ENCODE measurements at regions of chr17 and their contacts with region 1.

Region 1: GRCh38 chr17:38982858-38983746 is 15.9 kb upstream of the FBXO47 start:
- DNase-seq: peak in 1 of 2 donors; percentile 17
- ATAC-seq: peak; percentile 46 to 75
- H3K4me3 ChIP-seq: no peak overlapping the region
- H3K27ac ChIP-seq: no peak overlapping the region
- H3K4me1 ChIP-seq: peaks cover 0 to 9% of the 10 kb centered on the region in 2 donors
- H3K27me3 ChIP-seq: no peaks in the 10 kb centered on the region
- CTCF ChIP-seq: peak; percentile 63 to 78 (median 67)
- POLR2A ChIP-seq: no peak

Region 2: GRCh38 chr17:38400286-38400685 is 582.8 kb before region 1 on chr17:
- in situ Hi-C with region 1: no loop called
- intact Hi-C with region 1: no loop called
- DNase-seq: no peak
- ATAC-seq: no peak
- H3K4me3 ChIP-seq: no peak overlapping the region
- H3K27ac ChIP-seq: no peak overlapping the region
- H3K4me1 ChIP-seq: no peaks in the 10 kb centered on the region
- H3K27me3 ChIP-seq: no peaks in the 10 kb centered on the region
- CTCF ChIP-seq: no peak
- POLR2A ChIP-seq: no peak

Region 3: GRCh38 chr17:38898812-38899348 is 84.2 kb before region 1 on chr17:
- in situ Hi-C with region 1: loop called in 1 of 4 experiments (anchors 25 kb)
- intact Hi-C with region 1: no loop called
- DNase-seq: peak in 1 of 2 donors; percentile 37
- ATAC-seq: no peak
- H3K4me3 ChIP-seq: no peak overlapping the region
- H3K27ac ChIP-seq: peak overlapping the region; percentile 64 to 81 (median 76)
- H3K4me1 ChIP-seq: peaks cover 56 to 65% of the 10 kb centered on the region in 2 donors
- H3K27me3 ChIP-seq: no peaks in the 10 kb centered on the region
- CTCF ChIP-seq: no peak
- POLR2A ChIP-seq: no peak

Region 4: GRCh38 chr17:38958756-38959155 is 24.3 kb before region 1 on chr17:
- in situ Hi-C with region 1: no loop called
- intact Hi-C with region 1: no loop called
- DNase-seq: no peak
- ATAC-seq: no peak
- H3K4me3 ChIP-seq: no peak overlapping the region
- H3K27ac ChIP-seq: no peak overlapping the region
- H3K4me1 ChIP-seq: no peaks in the 10 kb centered on the region
- H3K27me3 ChIP-seq: no peaks in the 10 kb centered on the region
- CTCF ChIP-seq: no peak
- POLR2A ChIP-seq: no peak

Region 5: DNA sequence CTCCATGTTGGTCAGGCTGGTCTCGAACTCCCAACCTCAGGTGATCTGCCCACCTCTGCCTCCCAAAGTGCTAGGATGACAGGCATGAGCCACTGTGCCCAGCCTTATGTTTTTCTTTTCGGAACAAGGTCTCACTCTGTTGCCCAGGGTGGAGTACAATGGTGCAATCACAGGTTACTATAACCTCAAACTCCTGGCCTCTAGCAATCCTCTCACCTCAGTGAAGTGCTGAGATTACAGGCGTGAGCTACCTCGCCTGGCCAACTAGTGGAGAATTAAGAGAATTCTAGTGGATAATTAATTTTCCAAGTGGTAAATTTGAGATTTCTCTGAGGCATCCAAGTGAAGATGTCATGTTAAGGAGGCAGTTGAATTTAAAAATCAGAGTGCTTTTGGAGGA is 13.0 kb before region 1 on chr17:
- in situ Hi-C with region 1: no loop called
- intact Hi-C with region 1: no loop called
- DNase-seq: no peak
- ATAC-seq: no peak
- H3K4me3 ChIP-seq: no peak overlapping the region
- H3K27ac ChIP-seq: no peak overlapping the region
- H3K4me1 ChIP-seq: no peaks in the 10 kb centered on the region
- H3K27me3 ChIP-seq: no peaks in the 10 kb centered on the region
- CTCF ChIP-seq: no peak
- POLR2A ChIP-seq: no peak

Region 6: DNA sequence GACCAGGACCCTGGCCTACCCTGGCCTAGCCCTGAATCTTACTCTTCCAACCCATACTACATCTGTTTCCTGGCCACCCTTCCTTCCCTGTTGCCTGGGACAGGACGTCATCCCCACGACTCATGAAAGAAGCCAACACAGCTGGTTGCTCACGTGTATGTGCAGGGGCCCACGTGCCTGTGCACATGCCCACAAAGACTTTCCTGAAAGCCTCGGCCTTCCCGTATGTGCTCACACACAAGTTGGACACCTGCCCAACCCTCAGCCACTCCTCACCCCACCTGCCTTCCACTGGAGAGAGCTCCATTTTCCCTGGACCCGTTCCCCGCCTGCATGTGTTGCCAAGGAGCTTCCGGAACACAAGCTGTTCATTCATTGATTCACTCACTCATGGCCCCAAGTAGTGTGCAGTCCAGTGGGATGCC is 161.3 kb after region 1 on chr17:
- in situ Hi-C with region 1: loop called (anchors 5 to 10 kb)
- intact Hi-C with region 1: no loop called
- DNase-seq: peak; percentile 83 to 90
- ATAC-seq: peak; percentile 77 to 83
- H3K4me3 ChIP-seq: no peak overlapping the region
- H3K27ac ChIP-seq: peak overlapping the region; percentile 51 to 71 (median 68)
- H3K4me1 ChIP-seq: peaks cover 4 to 6% of the 10 kb centered on the region in 2 donors
- H3K27me3 ChIP-seq: no peaks in the 10 kb centered on the region
- CTCF ChIP-seq: no peak
- POLR2A ChIP-seq: no peak

Region 7: GRCh38 chr17:39153599-39154051 is 170.5 kb after region 1 on chr17:
- in situ Hi-C with region 1: loop called (anchors 5 to 10 kb)
- intact Hi-C with region 1: loop called (anchors 1 kb)
- DNase-seq: peak; percentile 81 to 87
- ATAC-seq: peak; percentile 83 to 85
- H3K4me3 ChIP-seq: peak overlapping the region; percentile 61 to 89 (median 86)
- H3K27ac ChIP-seq: peak overlapping the region; percentile 84 to 96 (median 92)
- H3K4me1 ChIP-seq: peaks cover 11 to 13% of the 10 kb centered on the region in 2 donors
- H3K27me3 ChIP-seq: peaks cover 5 to 18% (median 7%) of the 10 kb centered on the region in 3 donors
- CTCF ChIP-seq: peak in 2 of 5 experiments; percentile 25 to 32
- POLR2A ChIP-seq: peak; percentile 39 to 41

Region 8: DNA sequence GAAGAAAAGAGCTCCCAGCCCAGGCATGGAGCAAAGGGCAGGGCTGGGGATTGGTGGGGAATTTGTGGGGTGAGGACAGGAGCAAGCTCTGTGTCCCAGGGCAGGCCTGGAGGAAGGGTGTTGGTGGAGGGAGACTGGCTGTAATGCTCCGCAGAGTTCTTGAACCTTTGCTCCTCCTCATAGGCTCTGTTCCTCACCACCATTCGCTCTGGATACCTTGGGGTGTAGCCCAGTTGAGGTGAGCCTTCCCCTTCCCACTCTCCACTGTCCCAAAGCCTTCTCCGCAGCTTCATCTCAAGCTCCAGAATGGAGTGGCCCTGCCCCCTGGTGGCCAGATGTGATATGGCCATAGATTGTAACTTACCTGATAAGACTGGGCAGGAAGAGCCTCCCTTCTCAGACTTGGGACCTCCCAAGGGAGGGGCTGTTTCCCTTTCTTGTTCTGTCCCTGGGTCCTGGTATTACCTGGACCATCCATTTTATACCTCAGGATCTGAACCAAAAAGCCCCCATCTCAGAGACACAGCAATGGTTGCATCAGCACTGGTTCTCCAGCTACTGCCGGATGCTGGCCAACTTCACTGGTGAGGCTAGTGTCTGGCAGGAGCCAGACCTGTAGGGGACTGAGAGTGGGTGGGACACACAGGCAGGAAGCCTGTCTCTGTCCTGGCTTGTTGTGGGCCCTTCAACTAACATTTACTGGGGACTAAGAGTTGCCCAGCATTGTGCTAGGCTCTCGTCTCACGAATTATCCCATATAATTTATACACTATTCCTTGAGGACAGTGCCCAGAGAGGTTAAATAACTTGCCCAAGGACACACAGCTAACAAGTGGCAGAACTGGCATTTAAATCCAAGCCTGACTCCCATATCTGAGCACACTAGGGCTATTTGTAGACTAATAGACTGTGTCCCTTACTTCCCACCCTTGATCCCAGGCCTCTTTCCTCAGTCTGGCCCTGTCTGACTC is 261.8 kb after region 1 on chr17:
- in situ Hi-C with region 1: no loop called
- intact Hi-C with region 1: loop called (anchors 10 kb)
- DNase-seq: peak; percentile 70 to 81
- ATAC-seq: peak; percentile 82 to 91
- H3K4me3 ChIP-seq: no peak overlapping the region
- H3K27ac ChIP-seq: no peak overlapping the region
- H3K4me1 ChIP-seq: peaks cover 0 to 6% of the 10 kb centered on the region in 2 donors
- H3K27me3 ChIP-seq: no peaks in the 10 kb centered on the region
- CTCF ChIP-seq: peak; percentile 74 to 98 (median 95)
- POLR2A ChIP-seq: no peak

Measured in gastrocnemius medialis (tissue), 4 donors.